PC-9 (cell line): ENCODE measurements at regions of chr5 and their contacts with region 1.

Region 1: GRCh38 chr5:132490486-132491367 is at the start of gene IRF1:
- DNase-seq: peak; percentile 88 to 98
- H3K4me3 ChIP-seq: peak within 1 kb of the TSS; percentile 96
- H3K27ac ChIP-seq: peak within 1 kb of the TSS; percentile 72
- H3K4me1 ChIP-seq: peaks cover 38% of the 10 kb centered on the region
- H3K27me3 ChIP-seq: no peaks in the 10 kb centered on the region
- CTCF ChIP-seq: no peak
- total RNA-seq, gene IRF1: 27.1 and 38.9 TPM in 2 replicates

Region 2: DNA sequence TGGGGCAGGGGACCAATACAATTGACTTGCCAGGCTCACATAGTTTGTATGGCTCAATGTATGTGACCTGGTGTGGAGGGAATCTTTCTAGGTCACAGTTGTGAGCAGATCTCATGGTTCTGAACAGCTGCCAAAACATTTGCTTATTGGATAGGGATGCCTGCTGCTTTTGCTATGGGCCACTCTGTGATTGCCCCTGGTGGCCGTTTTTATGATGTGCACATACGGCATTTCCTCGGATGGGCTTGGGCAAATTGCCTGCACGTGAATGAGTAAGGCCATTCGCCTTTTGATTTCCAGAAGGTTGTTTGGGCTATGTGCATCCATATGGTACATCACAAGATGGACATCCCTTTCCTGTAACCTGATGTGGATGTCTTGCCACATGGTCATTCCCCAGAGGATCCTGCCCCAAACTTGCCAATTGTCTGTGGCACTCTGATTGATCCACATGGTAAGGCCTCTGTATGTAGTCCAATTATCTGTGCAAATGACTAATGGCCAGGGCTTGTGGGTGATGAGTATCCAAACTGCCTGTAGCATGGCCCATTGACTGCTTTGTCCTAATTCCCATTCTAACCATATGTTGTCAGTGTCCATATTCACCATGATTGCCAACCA is 207.2 kb before region 1 on chr5:
- CTCF ChIA-PET with region 1: no interaction called
- POLR2A ChIA-PET with region 1: no interaction called
- intact Hi-C with region 1: no loop called
- DNase-seq: peak in 1 of 2 experiments; percentile 41
- H3K4me3 ChIP-seq: no peak overlapping the region
- H3K27ac ChIP-seq: no peak overlapping the region
- H3K4me1 ChIP-seq: no peaks in the 10 kb centered on the region
- H3K27me3 ChIP-seq: no peaks in the 10 kb centered on the region
- CTCF ChIP-seq: peak; percentile 62

Region 3: GRCh38 chr5:132526290-132526973 is 35.7 kb after region 1 on chr5:
- CTCF ChIA-PET with region 1: no interaction called
- POLR2A ChIA-PET with region 1: interaction called, 10 read pairs
- intact Hi-C with region 1: no loop called
- DNase-seq: peak; percentile 52 to 63
- H3K4me3 ChIP-seq: no peak overlapping the region
- H3K27ac ChIP-seq: no peak overlapping the region
- H3K4me1 ChIP-seq: no peaks in the 10 kb centered on the region
- H3K27me3 ChIP-seq: no peaks in the 10 kb centered on the region
- CTCF ChIP-seq: peak; percentile 97

Region 4: DNA sequence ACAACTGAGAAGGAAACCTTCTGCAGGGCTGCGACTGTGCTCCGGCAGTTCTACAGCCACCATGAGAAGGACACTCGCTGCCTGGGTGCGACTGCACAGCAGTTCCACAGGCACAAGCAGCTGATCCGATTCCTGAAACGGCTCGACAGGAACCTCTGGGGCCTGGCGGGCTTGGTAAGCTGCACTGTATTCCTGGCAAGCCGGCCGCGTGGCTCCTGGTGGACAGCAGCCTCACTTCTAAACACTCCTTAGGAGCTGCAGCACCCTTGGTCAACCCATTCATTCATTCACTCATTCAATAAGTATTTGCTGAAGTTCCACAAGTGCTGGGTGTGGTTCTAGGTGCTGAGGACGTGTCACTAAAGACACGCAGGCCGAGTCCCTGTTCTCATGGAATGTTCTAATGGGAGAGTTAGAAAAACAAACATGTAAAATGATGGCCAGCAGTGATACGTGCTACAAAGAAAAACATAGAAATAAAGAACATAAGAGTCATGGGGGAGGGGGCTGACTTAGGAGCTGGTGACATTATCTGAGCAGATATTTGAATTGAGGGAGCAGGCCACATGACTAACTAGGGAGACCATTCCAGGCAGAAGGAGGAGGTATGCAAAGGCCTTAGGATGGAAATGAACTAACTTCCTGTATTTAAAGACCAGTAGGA is 189.1 kb after region 1 on chr5:
- CTCF ChIA-PET with region 1: no interaction called
- POLR2A ChIA-PET with region 1: no interaction called
- intact Hi-C with region 1: no loop called
- DNase-seq: no peak
- H3K4me3 ChIP-seq: no peak overlapping the region
- H3K27ac ChIP-seq: no peak overlapping the region
- H3K4me1 ChIP-seq: peaks cover 11% of the 10 kb centered on the region
- H3K27me3 ChIP-seq: no peaks in the 10 kb centered on the region
- CTCF ChIP-seq: no peak

Region 5: DNA sequence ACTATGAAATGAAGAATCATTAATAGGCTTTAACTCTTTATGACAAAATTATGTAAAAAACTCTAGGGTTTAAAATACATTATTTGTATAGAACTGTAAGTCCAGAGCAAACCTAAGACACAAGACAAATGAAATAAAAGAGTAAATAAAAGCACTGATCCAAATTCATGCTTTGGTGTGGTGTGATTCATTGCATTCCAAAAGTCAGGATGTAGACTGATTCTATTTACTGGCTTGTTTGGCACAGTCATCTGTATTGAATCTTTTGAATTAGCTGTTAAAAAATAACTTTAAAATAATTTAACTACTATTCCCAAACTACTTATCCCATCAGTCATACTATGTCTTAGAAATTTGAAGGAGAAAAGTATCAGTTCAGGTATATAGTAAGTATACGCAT is 214.1 kb after region 1 on chr5:
- CTCF ChIA-PET with region 1: no interaction called
- POLR2A ChIA-PET with region 1: no interaction called
- intact Hi-C with region 1: no loop called
- DNase-seq: no peak
- H3K4me3 ChIP-seq: no peak overlapping the region
- H3K27ac ChIP-seq: no peak overlapping the region
- H3K4me1 ChIP-seq: no peaks in the 10 kb centered on the region
- H3K27me3 ChIP-seq: no peaks in the 10 kb centered on the region
- CTCF ChIP-seq: no peak

Region 6: GRCh38 chr5:132754947-132755346 is 264.2 kb after region 1 on chr5:
- CTCF ChIA-PET with region 1: no interaction called
- POLR2A ChIA-PET with region 1: no interaction called
- intact Hi-C with region 1: no loop called
- DNase-seq: no peak
- H3K4me3 ChIP-seq: no peak overlapping the region
- H3K27ac ChIP-seq: no peak overlapping the region
- H3K4me1 ChIP-seq: 0 out of 2 replicates have a peak, but pooled peaks cover 6% of the 10 kb centered on the region
- H3K27me3 ChIP-seq: no peaks in the 10 kb centered on the region
- CTCF ChIP-seq: 0 out of 2 replicates have a peak, but pooled peaks have one; percentile 29